ENCODE measurements at regions of chr18 and their contacts with region 1.

Region 1: GRCh38 chr18:55405893-55406406 is 182.0 kb downstream of the TCF4 start:
- DNase-seq: peak; percentile 97
- H3K4me3 ChIP-seq: no peak overlapping the region
- H3K27ac ChIP-seq: peak overlapping the region; percentile 73
- H3K4me1 ChIP-seq: peaks cover 48% of the 10 kb centered on the region
- H3K27me3 ChIP-seq: no peaks in the 10 kb centered on the region
- CTCF ChIP-seq: peak in 1 of 2 donors; percentile 20
- POLR2A ChIP-seq: no peak

Region 2: GRCh38 chr18:55096261-55096951 is 309.5 kb before region 1 on chr18:
- CTCF ChIA-PET with region 1: no interaction called
- POLR2A ChIA-PET with region 1: no interaction called
- dilution Hi-C with region 1: no loop called
- intact Hi-C with region 1: loop called (anchors 5 kb)
- DNase-seq: peak; percentile 64
- H3K4me3 ChIP-seq: no peak overlapping the region
- H3K27ac ChIP-seq: peak overlapping the region; percentile 80
- H3K4me1 ChIP-seq: peaks cover 39% of the 10 kb centered on the region
- H3K27me3 ChIP-seq: peaks cover 0 to 8% of the 10 kb centered on the region in 2 experiments
- CTCF ChIP-seq: peak; percentile 46 to 59
- POLR2A ChIP-seq: no peak

Region 3: GRCh38 chr18:55265984-55266383 is 140.0 kb before region 1 on chr18:
- CTCF ChIA-PET with region 1: interaction called, 4 read pairs
- POLR2A ChIA-PET with region 1: no interaction called
- dilution Hi-C with region 1: no loop called
- intact Hi-C with region 1: loop called (anchors 1 kb)
- DNase-seq: peak; percentile 75
- H3K4me3 ChIP-seq: no peak overlapping the region
- H3K27ac ChIP-seq: peak overlapping the region; percentile 73
- H3K4me1 ChIP-seq: peaks cover 67% of the 10 kb centered on the region
- H3K27me3 ChIP-seq: no peaks in the 10 kb centered on the region
- CTCF ChIP-seq: no peak
- POLR2A ChIP-seq: peak; percentile 30

Region 4: GRCh38 chr18:55328301-55328700 is 77.6 kb before region 1 on chr18:
- CTCF ChIA-PET with region 1: interaction called, 10 read pairs
- POLR2A ChIA-PET with region 1: no interaction called
- dilution Hi-C with region 1: no loop called
- intact Hi-C with region 1: loop called (anchors 2 kb)
- DNase-seq: peak; percentile 96
- H3K4me3 ChIP-seq: peak overlapping the region in 1 of 3 experiments; percentile 19
- H3K27ac ChIP-seq: peak overlapping the region; percentile 92
- H3K4me1 ChIP-seq: peaks cover 69% of the 10 kb centered on the region
- H3K27me3 ChIP-seq: no peaks in the 10 kb centered on the region
- CTCF ChIP-seq: no peak
- POLR2A ChIP-seq: peak; percentile 36

Region 5: GRCh38 chr18:56021136-56021808 is 615.3 kb after region 1 on chr18:
- CTCF ChIA-PET with region 1: no interaction called
- POLR2A ChIA-PET with region 1: no interaction called
- dilution Hi-C with region 1: no loop called
- intact Hi-C with region 1: loop called (anchors 2 kb)
- DNase-seq: peak; percentile 86
- H3K4me3 ChIP-seq: peak overlapping the region in 1 of 3 experiments; percentile 3
- H3K27ac ChIP-seq: peak overlapping the region; percentile 93
- H3K4me1 ChIP-seq: peaks cover 35% of the 10 kb centered on the region
- H3K27me3 ChIP-seq: no peaks in the 10 kb centered on the region
- CTCF ChIP-seq: no peak
- POLR2A ChIP-seq: no peak

Region 6: DNA sequence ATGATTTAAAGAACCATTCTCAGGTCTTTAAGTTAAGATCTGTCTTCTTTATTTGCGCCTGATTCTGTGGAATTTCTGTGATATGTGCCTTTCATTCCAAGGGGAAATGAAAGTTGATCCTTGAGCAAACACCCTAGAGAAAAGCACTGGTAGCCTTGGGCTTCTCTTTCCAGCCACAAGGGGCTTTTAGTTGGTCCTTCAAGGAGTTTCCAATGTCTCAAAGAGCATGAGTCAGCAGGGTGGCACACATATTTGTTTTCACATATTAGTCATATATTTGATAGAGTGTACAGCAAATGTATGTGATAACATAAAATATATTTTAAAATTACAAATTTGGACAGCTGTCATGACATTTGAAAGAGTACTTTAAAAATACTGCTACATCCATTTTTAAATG is 893.0 kb after region 1 on chr18:
- CTCF ChIA-PET with region 1: no interaction called
- POLR2A ChIA-PET with region 1: no interaction called
- dilution Hi-C with region 1: no loop called
- intact Hi-C with region 1: loop called (anchors 10 kb)
- DNase-seq: peak; percentile 75
- H3K4me3 ChIP-seq: no peak overlapping the region
- H3K27ac ChIP-seq: no peak overlapping the region
- H3K4me1 ChIP-seq: peaks cover 7% of the 10 kb centered on the region
- H3K27me3 ChIP-seq: no peaks in the 10 kb centered on the region
- CTCF ChIP-seq: peak; percentile 40 to 46
- POLR2A ChIP-seq: no peak